Right ventricle myocardium superior (tissue), 1 donor: ENCODE measurements at regions of chr22 and their contacts with region 1.

Region 1: DNA sequence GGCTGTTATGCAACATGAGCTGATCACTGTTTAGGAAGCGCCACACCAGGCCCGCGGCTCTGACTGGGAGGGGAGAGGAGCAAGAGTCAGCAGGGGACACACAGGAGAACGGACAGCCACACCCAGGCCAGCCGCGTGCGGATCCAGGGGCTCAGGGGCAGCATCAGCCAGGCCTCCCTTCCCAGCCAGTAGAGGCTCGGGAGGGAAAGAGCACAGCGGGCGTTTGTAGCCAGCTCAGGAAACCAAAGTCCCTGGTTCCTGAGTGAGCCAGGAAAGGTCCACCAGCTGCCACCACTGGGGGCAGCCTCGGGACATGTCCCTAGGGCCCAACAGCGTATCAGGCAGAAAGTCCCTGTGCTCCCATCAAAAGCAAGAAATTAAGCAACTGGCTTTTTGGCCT is 71.8 kb upstream of the PITPNB start:
- DNase-seq: peak; percentile 90
- ATAC-seq: peak; percentile 88

Region 2: GRCh38 chr22:27919222-27919941 is 71.5 kb before region 1 on chr22 and contains the start of gene PITPNB:
- intact Hi-C with region 1: loop called (anchors 5 kb)
- DNase-seq: peak; percentile 98
- ATAC-seq: peak; percentile 98
- total RNA-seq, gene PITPNB: 40.2 TPM

Region 3: GRCh38 chr22:28279888-28280287 is 289.0 kb after region 1 on chr22:
- intact Hi-C with region 1: no loop called
- DNase-seq: no peak
- ATAC-seq: no peak